ENCODE measurements at regions of chr1 and their contacts with region 1.

Region 1: GRCh38 chr1:43934101-43934985 is 742 bp downstream of the ARTN start:
- DNase-seq: peak; percentile 76
- ATAC-seq: peak; percentile 64
- H3K4me3 Mint-ChIP-seq: peak overlapping the region; percentile 41
- H3K27ac Mint-ChIP-seq: no peak overlapping the region
- H3K4me1 Mint-ChIP-seq: peaks cover 24% of the 10 kb centered on the region
- H3K27me3 Mint-ChIP-seq: peaks cover 25% of the 10 kb centered on the region
- CTCF ChIP-seq: peak; percentile 79

Region 2: DNA sequence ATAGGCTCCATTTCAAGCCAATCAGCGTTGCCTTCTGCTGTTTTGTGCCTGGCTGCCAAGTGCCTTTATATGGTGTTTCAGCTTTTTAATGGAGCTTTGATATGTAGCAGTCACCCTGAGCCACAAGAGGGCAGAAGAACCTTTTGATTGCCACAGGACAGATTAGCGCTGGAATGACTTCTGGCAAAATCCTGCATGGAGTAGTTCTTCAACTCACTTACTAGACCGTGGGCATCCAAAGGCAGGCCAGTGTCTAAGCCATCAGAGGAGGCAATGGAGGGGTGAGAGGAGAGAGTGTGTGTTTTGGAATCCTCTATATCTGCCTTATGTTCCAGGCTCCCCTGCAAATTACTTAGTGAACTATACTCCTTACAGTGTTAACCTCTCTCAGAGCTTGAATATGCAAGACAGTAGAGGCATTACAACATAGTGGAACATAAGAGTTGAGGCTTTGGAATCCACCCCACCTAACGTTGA is 170.8 kb before region 1 on chr1:
- CTCF ChIA-PET with region 1: interaction called, 307 read pairs
- POLR2A ChIA-PET with region 1: no interaction called
- intact Hi-C with region 1: loop called (anchors 2 kb)
- DNase-seq: peak; percentile 67
- ATAC-seq: peak; percentile 80
- H3K4me3 Mint-ChIP-seq: no peak overlapping the region
- H3K27ac Mint-ChIP-seq: no peak overlapping the region
- H3K4me1 Mint-ChIP-seq: no peaks in the 10 kb centered on the region
- H3K27me3 Mint-ChIP-seq: no peaks in the 10 kb centered on the region
- CTCF ChIP-seq: peak; percentile 81

Region 3: GRCh38 chr1:43861337-43861736 is 73.0 kb before region 1 on chr1:
- CTCF ChIA-PET with region 1: interaction called, 11 read pairs
- POLR2A ChIA-PET with region 1: no interaction called
- intact Hi-C with region 1: no loop called
- DNase-seq: no peak
- ATAC-seq: no peak
- H3K4me3 Mint-ChIP-seq: no peak overlapping the region
- H3K27ac Mint-ChIP-seq: no peak overlapping the region
- H3K4me1 Mint-ChIP-seq: peaks cover 17% of the 10 kb centered on the region
- H3K27me3 Mint-ChIP-seq: no peaks in the 10 kb centered on the region
- CTCF ChIP-seq: no peak

Region 4: GRCh38 chr1:43946236-43947060 is 12.1 kb after region 1 on chr1 and contains the start of gene IPO13:
- CTCF ChIA-PET with region 1: interaction called, 185 read pairs
- POLR2A ChIA-PET with region 1: interaction called, 4 read pairs
- intact Hi-C with region 1: no loop called
- DNase-seq: peak; percentile 98
- ATAC-seq: peak; percentile 98
- H3K4me3 Mint-ChIP-seq: peak within 1 kb of the TSS; percentile 94
- H3K27ac Mint-ChIP-seq: peak within 1 kb of the TSS; percentile 90
- H3K4me1 Mint-ChIP-seq: peaks cover 38% of the 10 kb centered on the region
- H3K27me3 Mint-ChIP-seq: no peaks in the 10 kb centered on the region
- CTCF ChIP-seq: peak; percentile 71
- total RNA-seq, gene IPO13: 16.2 to 16.5 TPM

Region 5: DNA sequence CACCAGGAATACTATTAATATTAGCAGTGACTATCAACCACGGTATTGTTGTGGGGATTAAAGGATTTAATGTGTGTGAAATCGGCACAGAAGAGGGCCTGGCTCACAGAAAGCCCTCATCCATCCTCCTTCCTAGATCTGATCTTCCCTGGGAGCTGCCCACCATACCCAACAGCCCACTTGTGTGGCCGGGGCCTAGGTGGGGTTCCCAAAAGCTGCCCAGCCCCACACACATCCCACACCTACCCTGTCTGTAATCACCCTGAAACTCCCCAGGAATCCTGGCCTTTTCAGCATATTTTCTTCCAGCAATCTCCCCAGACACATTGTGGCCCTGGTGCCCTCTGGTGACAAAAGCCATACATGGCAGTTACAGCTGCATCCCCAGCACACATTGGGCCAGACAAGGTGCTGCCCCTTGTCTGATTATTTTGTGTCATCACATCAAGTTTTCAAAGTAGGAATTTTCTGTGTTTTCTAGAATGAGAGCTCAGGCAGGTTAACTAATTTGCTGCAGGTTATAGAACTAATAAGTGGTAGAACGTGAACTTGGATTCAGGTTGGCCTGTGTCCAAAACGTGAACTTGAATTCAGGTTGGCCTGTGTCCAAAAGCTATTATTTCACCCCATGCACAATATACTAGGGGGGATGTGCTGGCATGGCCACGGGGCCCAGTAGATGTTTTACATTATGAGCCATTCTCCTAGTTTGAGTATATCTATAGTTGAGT is 102.2 kb after region 1 on chr1:
- CTCF ChIA-PET with region 1: interaction called, 11 read pairs
- POLR2A ChIA-PET with region 1: no interaction called
- intact Hi-C with region 1: no loop called
- DNase-seq: peak; percentile 81
- ATAC-seq: peak; percentile 93
- H3K4me3 Mint-ChIP-seq: no peak overlapping the region
- H3K27ac Mint-ChIP-seq: no peak overlapping the region
- H3K4me1 Mint-ChIP-seq: peaks cover 9% of the 10 kb centered on the region
- H3K27me3 Mint-ChIP-seq: no peaks in the 10 kb centered on the region
- CTCF ChIP-seq: peak; percentile 72

Region 6: GRCh38 chr1:45065083-45065482 is 1130.7 kb after region 1 on chr1:
- CTCF ChIA-PET with region 1: no interaction called
- POLR2A ChIA-PET with region 1: no interaction called
- intact Hi-C with region 1: no loop called
- DNase-seq: no peak
- ATAC-seq: no peak
- H3K4me3 Mint-ChIP-seq: no peak overlapping the region
- H3K27ac Mint-ChIP-seq: no peak overlapping the region
- H3K4me1 Mint-ChIP-seq: no peaks in the 10 kb centered on the region
- H3K27me3 Mint-ChIP-seq: no peaks in the 10 kb centered on the region
- CTCF ChIP-seq: no peak

Measured in activated CD8-positive, alpha-beta T cell treated with anti-CD3 and anti-CD28 coated beads for 36 hours (primary cell).